Calu3 (cell line): ENCODE measurements at regions of chr7 and their contacts with region 1.

Region 1: GRCh38 chr7:148503875-148504487 is 86.6 kb upstream of the C7orf33 start:
- DNase-seq: no peak
- H3K4me3 Mint-ChIP-seq: no peak overlapping the region
- H3K27ac Mint-ChIP-seq: no peak overlapping the region
- H3K4me1 Mint-ChIP-seq: peaks cover 16% of the 10 kb centered on the region
- H3K27me3 Mint-ChIP-seq: peaks cover 67% of the 10 kb centered on the region
- CTCF ChIP-seq: peak; percentile 34

Region 2: GRCh38 chr7:148527707-148528168 is 23.8 kb after region 1 on chr7:
- CTCF ChIA-PET with region 1: no interaction called
- intact Hi-C with region 1: loop called (anchors 1 kb)
- DNase-seq: peak; percentile 80
- H3K4me3 Mint-ChIP-seq: no peak overlapping the region
- H3K27ac Mint-ChIP-seq: no peak overlapping the region
- H3K4me1 Mint-ChIP-seq: peaks cover 5% of the 10 kb centered on the region
- H3K27me3 Mint-ChIP-seq: peaks cover 58% of the 10 kb centered on the region
- CTCF ChIP-seq: peak; percentile 54

Region 3: GRCh38 chr7:148763622-148764021 is 259.6 kb after region 1 on chr7:
- CTCF ChIA-PET with region 1: interaction called, 3 read pairs
- intact Hi-C with region 1: loop called (anchors 10 kb)
- DNase-seq: no peak
- H3K4me3 Mint-ChIP-seq: no peak overlapping the region
- H3K27ac Mint-ChIP-seq: no peak overlapping the region
- H3K4me1 Mint-ChIP-seq: no peaks in the 10 kb centered on the region
- H3K27me3 Mint-ChIP-seq: no peaks in the 10 kb centered on the region
- CTCF ChIP-seq: no peak